ENCODE measurements at regions of chr12 and their contacts with region 1.

Region 1: GRCh38 chr12:50986966-50987737 is 34.8 kb downstream of the HIGD1C start:
- DNase-seq: peak; percentile 72
- ATAC-seq: peak; percentile 70
- H3K4me3 ChIP-seq: no peak overlapping the region
- H3K27ac ChIP-seq: no peak overlapping the region
- H3K4me1 ChIP-seq: peaks cover 4% of the 10 kb centered on the region; the same call in 1 of the 2 replicates
- H3K27me3 ChIP-seq: no peaks in the 10 kb centered on the region
- CTCF ChIP-seq: peak; percentile 75
- POLR2A ChIP-seq: no peak
- RAD21 ChIP-seq: peak; percentile 74

Region 2: GRCh38 chr12:50394469-50395025 is 592.6 kb before region 1 on chr12:
- CTCF ChIA-PET with region 1: no interaction called
- POLR2A ChIA-PET with region 1: interaction called, 10 read pairs
- dilution Hi-C with region 1: no loop called
- in situ Hi-C with region 1: no loop called
- intact Hi-C with region 1: no loop called
- DNase-seq: no peak
- ATAC-seq: no peak
- H3K4me3 ChIP-seq: no peak overlapping the region
- H3K27ac ChIP-seq: no peak overlapping the region
- H3K4me1 ChIP-seq: peaks cover 9% of the 10 kb centered on the region
- H3K27me3 ChIP-seq: no peaks in the 10 kb centered on the region
- CTCF ChIP-seq: no peak
- POLR2A ChIP-seq: no peak
- RAD21 ChIP-seq: no peak

Region 3: GRCh38 chr12:50482566-50482965 is 504.6 kb before region 1 on chr12:
- CTCF ChIA-PET with region 1: no interaction called
- POLR2A ChIA-PET with region 1: no interaction called
- dilution Hi-C with region 1: no loop called
- in situ Hi-C with region 1: loop called (anchors 25 kb)
- intact Hi-C with region 1: no loop called
- DNase-seq: peak; percentile 29
- ATAC-seq: no peak
- H3K4me3 ChIP-seq: no peak overlapping the region
- H3K27ac ChIP-seq: no peak overlapping the region
- H3K4me1 ChIP-seq: no peaks in the 10 kb centered on the region
- H3K27me3 ChIP-seq: no peaks in the 10 kb centered on the region
- CTCF ChIP-seq: no peak
- POLR2A ChIP-seq: no peak
- RAD21 ChIP-seq: no peak

Region 4: GRCh38 chr12:50825372-50825838 is 161.7 kb before region 1 on chr12:
- CTCF ChIA-PET with region 1: interaction called, 41 read pairs
- POLR2A ChIA-PET with region 1: no interaction called
- dilution Hi-C with region 1: no loop called
- in situ Hi-C with region 1: loop called (anchors 10 kb)
- intact Hi-C with region 1: loop called (anchors 1 kb)
- DNase-seq: peak; percentile 83
- ATAC-seq: peak; percentile 79
- H3K4me3 ChIP-seq: no peak overlapping the region
- H3K27ac ChIP-seq: no peak overlapping the region
- H3K4me1 ChIP-seq: peaks cover 2% of the 10 kb centered on the region
- H3K27me3 ChIP-seq: no peaks in the 10 kb centered on the region
- CTCF ChIP-seq: peak; percentile 67
- POLR2A ChIP-seq: no peak
- RAD21 ChIP-seq: peak; percentile 67

Region 5: GRCh38 chr12:50924439-50925341 is 62.5 kb before region 1 on chr12:
- CTCF ChIA-PET with region 1: no interaction called
- POLR2A ChIA-PET with region 1: no interaction called
- dilution Hi-C with region 1: no loop called
- in situ Hi-C with region 1: no loop called
- intact Hi-C with region 1: loop called (anchors 5 kb)
- DNase-seq: peak; percentile 86
- ATAC-seq: peak; percentile 88
- H3K4me3 ChIP-seq: peak overlapping the region; percentile 37
- H3K27ac ChIP-seq: peak overlapping the region; percentile 86; the same call in 1 of the 2 replicates
- H3K4me1 ChIP-seq: peaks cover 13% of the 10 kb centered on the region
- H3K27me3 ChIP-seq: no peaks in the 10 kb centered on the region
- CTCF ChIP-seq: no peak
- POLR2A ChIP-seq: no peak
- RAD21 ChIP-seq: no peak

Region 6: GRCh38 chr12:50948798-50949197 is 38.4 kb before region 1 on chr12:
- CTCF ChIA-PET with region 1: no interaction called
- POLR2A ChIA-PET with region 1: no interaction called
- dilution Hi-C with region 1: no loop called
- in situ Hi-C with region 1: no loop called
- intact Hi-C with region 1: no loop called
- DNase-seq: peak; percentile 19
- ATAC-seq: no peak
- H3K4me3 ChIP-seq: no peak overlapping the region
- H3K27ac ChIP-seq: no peak overlapping the region
- H3K4me1 ChIP-seq: no peaks in the 10 kb centered on the region
- H3K27me3 ChIP-seq: no peaks in the 10 kb centered on the region
- CTCF ChIP-seq: no peak
- POLR2A ChIP-seq: no peak
- RAD21 ChIP-seq: no peak

Region 7: GRCh38 chr12:52735816-52736632 is 1748.9 kb after region 1 on chr12:
- CTCF ChIA-PET with region 1: no interaction called
- POLR2A ChIA-PET with region 1: no interaction called
- dilution Hi-C with region 1: no loop called
- in situ Hi-C with region 1: no loop called
- intact Hi-C with region 1: no loop called
- DNase-seq: no peak
- ATAC-seq: no peak
- H3K4me3 ChIP-seq: no peak overlapping the region
- H3K27ac ChIP-seq: no peak overlapping the region
- H3K4me1 ChIP-seq: no peaks in the 10 kb centered on the region
- H3K27me3 ChIP-seq: 0 out of 2 replicates have a peak, but pooled peaks cover 1% of the 10 kb centered on the region
- CTCF ChIP-seq: no peak
- POLR2A ChIP-seq: no peak
- RAD21 ChIP-seq: no peak

Measured in IMR-90 (cell line).